ENCODE measurements at regions of chr6 and their contacts with region 1.

Region 1: DNA sequence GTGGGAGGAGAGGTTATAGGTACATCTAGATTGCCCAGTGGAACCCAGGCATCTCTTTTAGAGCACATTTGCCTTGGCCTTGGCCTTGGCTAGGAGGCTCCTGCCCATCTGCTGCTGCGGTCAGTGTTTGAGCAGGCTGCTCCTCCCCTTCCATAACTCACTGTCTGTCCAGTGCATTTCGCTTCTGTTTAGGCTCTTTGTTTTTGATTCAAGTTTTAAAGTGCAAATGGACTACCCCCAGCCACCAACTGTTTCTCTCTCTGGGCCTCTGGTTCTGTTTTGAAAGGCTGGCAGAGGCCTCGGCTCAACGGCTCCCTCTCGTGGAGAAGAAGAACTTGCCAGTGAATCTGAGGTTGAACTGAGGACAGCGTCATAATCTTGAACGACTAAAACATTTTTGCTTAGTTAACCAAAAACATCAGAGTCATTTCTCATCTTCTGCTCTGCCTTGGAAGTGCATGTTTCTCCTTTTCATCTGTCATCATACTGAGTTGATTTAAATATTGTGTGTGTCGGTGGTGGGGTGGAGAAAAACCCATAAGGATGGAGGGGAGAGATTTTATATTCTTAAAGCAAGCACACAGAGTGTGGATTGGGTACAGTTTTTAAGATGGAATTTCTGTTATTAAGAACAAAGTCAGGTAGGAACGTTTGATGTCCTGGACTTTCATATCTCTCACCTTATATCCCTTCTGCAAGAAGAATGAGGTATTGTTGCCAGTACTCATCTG is 171.4 kb downstream of the DTNBP1 start:
- DNase-seq: peak; percentile 75
- H3K4me3 ChIP-seq: no peak overlapping the region
- H3K27ac ChIP-seq: peak overlapping the region in 2 of 4 donors; percentile 21 to 31
- H3K4me1 ChIP-seq: peaks cover 3 to 14% (median 6%) of the 10 kb centered on the region in 4 donors
- H3K27me3 ChIP-seq: no peaks in the 10 kb centered on the region
- CTCF ChIP-seq: peak; percentile 77 to 92 (median 91)
- EP300 ChIP-seq: no peak
- POLR2A ChIP-seq: no peak

Region 2: DNA sequence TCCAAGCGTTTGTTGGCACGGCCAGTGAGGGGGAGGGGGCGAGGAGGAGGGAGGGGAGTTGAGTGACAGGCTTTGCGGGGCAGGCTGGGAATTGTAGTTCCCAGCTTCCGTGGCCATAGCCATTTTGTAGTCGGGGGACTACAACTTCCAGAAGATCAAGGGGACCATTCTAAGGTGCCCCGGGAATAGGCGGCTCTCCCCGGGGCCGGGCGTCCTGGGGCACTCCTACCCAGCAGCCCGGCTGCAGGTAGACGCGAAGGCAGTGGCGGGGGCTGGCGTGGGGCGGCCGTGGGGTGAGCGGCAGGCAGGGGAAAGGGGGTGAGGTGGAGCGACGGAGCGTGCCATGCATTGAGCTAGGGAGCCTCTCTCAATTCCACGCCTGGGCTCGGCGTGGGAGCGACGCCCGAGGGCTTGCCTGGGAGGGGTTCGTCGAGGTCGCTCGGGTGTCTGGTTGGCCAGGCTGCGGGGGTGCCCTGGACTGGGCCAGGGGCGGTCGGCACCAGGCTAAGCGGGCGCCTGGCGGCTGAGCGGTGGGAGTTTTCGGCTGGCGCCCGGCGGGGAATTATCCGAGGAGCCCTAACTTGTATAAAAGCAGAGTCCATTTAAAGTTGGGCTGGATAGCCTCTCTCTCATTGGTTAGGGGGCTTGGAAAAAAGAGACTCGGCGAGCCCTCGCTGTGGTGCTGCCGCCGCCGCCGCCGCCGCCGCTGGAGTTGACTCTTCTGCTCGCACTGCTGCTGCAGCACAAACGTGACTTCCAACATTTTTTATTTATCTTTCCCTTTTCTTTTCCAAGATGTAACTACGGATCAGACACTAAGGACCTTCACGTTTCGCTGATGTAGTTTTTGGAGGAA is 245.8 kb before region 1 on chr6 and contains the start of gene JARID2:
- in situ Hi-C with region 1: no loop called
- intact Hi-C with region 1: loop called (anchors 10 kb)
- DNase-seq: peak; percentile 99
- H3K4me3 ChIP-seq: peak within 1 kb of the TSS; percentile 79 to 90 (median 86)
- H3K27ac ChIP-seq: peak within 1 kb of the TSS; percentile 91 to 92 (median 91)
- H3K4me1 ChIP-seq: peaks cover 0 to 23% (median 22%) of the 10 kb centered on the region in 4 donors
- H3K27me3 ChIP-seq: no peaks in the 10 kb centered on the region
- CTCF ChIP-seq: peak in 2 of 5 experiments; percentile 8 to 43
- EP300 ChIP-seq: no peak
- POLR2A ChIP-seq: peak; percentile 96
- total RNA-seq, gene JARID2: 9.4 to 18.7 (median 10.9) TPM

Region 3: DNA sequence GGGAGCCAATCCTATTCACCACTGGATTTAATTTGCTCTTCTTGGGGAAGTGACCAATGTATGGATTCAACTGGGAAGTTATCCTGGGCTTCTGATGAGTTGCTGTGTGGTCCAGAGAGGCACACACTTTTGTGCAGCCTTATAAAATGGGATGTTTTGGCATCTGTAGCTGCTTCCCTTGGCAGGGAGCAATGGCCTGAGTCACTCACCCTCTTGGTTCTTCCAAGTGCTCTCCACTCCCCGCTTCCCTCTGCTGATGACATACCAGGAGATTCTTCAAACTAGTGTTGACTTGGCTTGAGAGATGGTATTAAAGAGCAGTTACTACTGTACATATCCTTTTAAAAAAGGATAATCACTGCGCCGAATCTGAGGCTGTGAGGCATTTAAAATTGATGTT is 139.8 kb before region 1 on chr6:
- in situ Hi-C with region 1: no loop called
- intact Hi-C with region 1: no loop called
- DNase-seq: no peak
- H3K4me3 ChIP-seq: no peak overlapping the region
- H3K27ac ChIP-seq: no peak overlapping the region
- H3K4me1 ChIP-seq: peaks cover 0 to 26% (median 11%) of the 10 kb centered on the region in 4 donors
- H3K27me3 ChIP-seq: no peaks in the 10 kb centered on the region
- CTCF ChIP-seq: no peak
- EP300 ChIP-seq: no peak
- POLR2A ChIP-seq: no peak

Measured in transverse colon (tissue), 4 donors.